MCF 10A (cell line): ENCODE measurements at regions of chr18 and their contacts with region 1.

Region 1: GRCh38 chr18:76259096-76259495 is 235.9 kb downstream of the ZNF516 start:
- DNase-seq: no peak
- H3K4me3 Mint-ChIP-seq: no peak overlapping the region
- H3K27ac Mint-ChIP-seq: no peak overlapping the region
- H3K4me1 Mint-ChIP-seq: no peaks in the 10 kb centered on the region
- H3K27me3 Mint-ChIP-seq: no peaks in the 10 kb centered on the region
- CTCF ChIP-seq: no peak

Region 2: GRCh38 chr18:75854174-75854573 is 404.9 kb before region 1 on chr18:
- CTCF ChIA-PET with region 1: no interaction called
- POLR2A ChIA-PET with region 1: no interaction called
- intact Hi-C with region 1: no loop called
- DNase-seq: peak; percentile 17
- H3K4me3 Mint-ChIP-seq: no peak overlapping the region
- H3K27ac Mint-ChIP-seq: no peak overlapping the region
- H3K4me1 Mint-ChIP-seq: no peaks in the 10 kb centered on the region
- H3K27me3 Mint-ChIP-seq: no peaks in the 10 kb centered on the region
- CTCF ChIP-seq: peak; percentile 30

Region 3: DNA sequence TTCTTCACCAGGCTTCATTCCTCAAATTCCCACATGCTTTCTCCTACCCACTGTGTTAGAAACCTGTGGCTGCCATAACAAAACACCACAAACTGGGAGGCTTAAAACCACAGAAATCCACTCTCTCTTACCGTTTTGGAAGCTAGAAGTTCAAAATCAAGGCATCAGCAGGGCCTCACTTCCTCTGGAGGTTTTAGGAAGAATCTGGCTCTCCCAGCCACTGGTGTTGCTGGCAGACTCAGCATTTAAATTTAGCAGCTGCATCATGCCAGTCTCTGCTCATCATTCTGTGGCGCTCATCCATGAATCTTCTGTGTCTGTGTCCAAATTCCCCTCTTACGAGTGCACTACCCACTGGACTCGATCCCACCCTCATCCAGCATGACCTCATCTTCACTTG is 12.5 kb before region 1 on chr18:
- CTCF ChIA-PET with region 1: interaction called, 14 read pairs
- POLR2A ChIA-PET with region 1: no interaction called
- intact Hi-C with region 1: no loop called
- DNase-seq: no peak
- H3K4me3 Mint-ChIP-seq: no peak overlapping the region
- H3K27ac Mint-ChIP-seq: no peak overlapping the region
- H3K4me1 Mint-ChIP-seq: no peaks in the 10 kb centered on the region
- H3K27me3 Mint-ChIP-seq: no peaks in the 10 kb centered on the region
- CTCF ChIP-seq: no peak

Region 4: DNA sequence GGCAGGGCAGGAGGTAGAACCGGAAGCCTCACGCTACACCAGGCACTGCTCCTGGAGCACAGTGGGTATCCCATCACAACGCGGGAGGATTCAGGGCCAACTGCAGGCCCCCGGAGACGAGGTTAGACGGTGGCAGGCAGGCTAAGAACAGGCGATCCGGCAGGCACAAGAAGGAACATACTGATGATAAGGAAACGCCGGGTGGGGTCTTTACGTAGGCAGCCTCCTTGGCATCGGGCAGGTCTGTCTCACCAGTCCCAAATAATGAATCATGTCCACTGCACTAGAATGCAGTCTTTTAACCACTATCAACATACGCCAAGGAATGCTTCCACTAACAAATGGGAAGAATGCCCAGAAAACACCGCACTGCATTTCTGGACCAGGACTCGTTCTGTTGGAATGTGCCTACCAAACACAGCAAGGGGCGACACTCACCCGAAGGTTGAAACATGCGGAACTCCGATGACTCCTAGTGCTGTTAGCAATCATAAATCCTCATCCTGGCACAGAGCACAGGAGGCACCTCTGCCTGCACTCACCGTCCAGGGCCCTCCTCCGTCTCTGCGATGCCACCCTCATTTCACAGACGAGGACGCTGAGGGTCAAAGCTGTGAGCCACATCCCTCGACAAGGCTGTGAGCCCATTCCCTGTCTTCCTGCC is 200.7 kb after region 1 on chr18:
- CTCF ChIA-PET with region 1: no interaction called
- POLR2A ChIA-PET with region 1: no interaction called
- intact Hi-C with region 1: no loop called
- DNase-seq: peak; percentile 98
- H3K4me3 Mint-ChIP-seq: peak overlapping the region; percentile 61
- H3K27ac Mint-ChIP-seq: peak overlapping the region; percentile 65
- H3K4me1 Mint-ChIP-seq: peaks cover 22% of the 10 kb centered on the region
- H3K27me3 Mint-ChIP-seq: no peaks in the 10 kb centered on the region
- CTCF ChIP-seq: no peak

Region 5: GRCh38 chr18:76709659-76710645 is 450.9 kb after region 1 on chr18:
- CTCF ChIA-PET with region 1: interaction called, 3 read pairs
- POLR2A ChIA-PET with region 1: no interaction called
- intact Hi-C with region 1: loop called (anchors 5 kb)
- DNase-seq: peak; percentile 70
- H3K4me3 Mint-ChIP-seq: no peak overlapping the region
- H3K27ac Mint-ChIP-seq: no peak overlapping the region
- H3K4me1 Mint-ChIP-seq: no peaks in the 10 kb centered on the region
- H3K27me3 Mint-ChIP-seq: no peaks in the 10 kb centered on the region
- CTCF ChIP-seq: peak; percentile 91